B cell (primary cell): ENCODE measurements at regions of chr9 and their contacts with region 1.

Region 1: GRCh38 chr9:105881654-105882349 is 187.5 kb downstream of the TMEM38B start:
- DNase-seq: peak; percentile 67
- ATAC-seq: no peak
- H3K4me3 ChIP-seq: no peak overlapping the region
- H3K4me3 Mint-ChIP-seq: no peak overlapping the region
- H3K27ac ChIP-seq: no peak overlapping the region
- H3K27ac Mint-ChIP-seq: no peak overlapping the region
- H3K4me1 ChIP-seq: peaks cover 3 to 4% of the 10 kb centered on the region in 2 donors
- H3K4me1 Mint-ChIP-seq: peaks cover 11% of the 10 kb centered on the region
- H3K27me3 ChIP-seq: no peaks in the 10 kb centered on the region
- H3K27me3 Mint-ChIP-seq: peaks cover 11% of the 10 kb centered on the region
- CTCF ChIP-seq: peak; percentile 97

Region 2: GRCh38 chr9:105425841-105426436 is 455.9 kb before region 1 on chr9:
- CTCF ChIA-PET with region 1: no interaction called
- POLR2A ChIA-PET with region 1: no interaction called
- intact Hi-C with region 1: loop called (anchors 5 kb)
- DNase-seq: no peak
- ATAC-seq: no peak
- H3K4me3 ChIP-seq: no peak overlapping the region
- H3K4me3 Mint-ChIP-seq: no peak overlapping the region
- H3K27ac ChIP-seq: no peak overlapping the region
- H3K27ac Mint-ChIP-seq: no peak overlapping the region
- H3K4me1 ChIP-seq: no peaks in the 10 kb centered on the region
- H3K4me1 Mint-ChIP-seq: peaks cover 2% of the 10 kb centered on the region
- H3K27me3 ChIP-seq: no peaks in the 10 kb centered on the region
- H3K27me3 Mint-ChIP-seq: peaks cover 3% of the 10 kb centered on the region
- CTCF ChIP-seq: peak; percentile 41

Region 3: GRCh38 chr9:105608721-105609598 is 272.8 kb before region 1 on chr9:
- CTCF ChIA-PET with region 1: interaction called, 38 read pairs
- POLR2A ChIA-PET with region 1: no interaction called
- intact Hi-C with region 1: loop called (anchors 1 kb)
- DNase-seq: peak; percentile 69
- ATAC-seq: peak; percentile 60
- H3K4me3 ChIP-seq: no peak overlapping the region
- H3K4me3 Mint-ChIP-seq: no peak overlapping the region
- H3K27ac ChIP-seq: no peak overlapping the region
- H3K27ac Mint-ChIP-seq: peak overlapping the region; percentile 50
- H3K4me1 ChIP-seq: no peaks in the 10 kb centered on the region
- H3K4me1 Mint-ChIP-seq: peaks cover 3% of the 10 kb centered on the region
- H3K27me3 ChIP-seq: no peaks in the 10 kb centered on the region
- H3K27me3 Mint-ChIP-seq: no peaks in the 10 kb centered on the region
- CTCF ChIP-seq: peak; percentile 86

Region 4: DNA sequence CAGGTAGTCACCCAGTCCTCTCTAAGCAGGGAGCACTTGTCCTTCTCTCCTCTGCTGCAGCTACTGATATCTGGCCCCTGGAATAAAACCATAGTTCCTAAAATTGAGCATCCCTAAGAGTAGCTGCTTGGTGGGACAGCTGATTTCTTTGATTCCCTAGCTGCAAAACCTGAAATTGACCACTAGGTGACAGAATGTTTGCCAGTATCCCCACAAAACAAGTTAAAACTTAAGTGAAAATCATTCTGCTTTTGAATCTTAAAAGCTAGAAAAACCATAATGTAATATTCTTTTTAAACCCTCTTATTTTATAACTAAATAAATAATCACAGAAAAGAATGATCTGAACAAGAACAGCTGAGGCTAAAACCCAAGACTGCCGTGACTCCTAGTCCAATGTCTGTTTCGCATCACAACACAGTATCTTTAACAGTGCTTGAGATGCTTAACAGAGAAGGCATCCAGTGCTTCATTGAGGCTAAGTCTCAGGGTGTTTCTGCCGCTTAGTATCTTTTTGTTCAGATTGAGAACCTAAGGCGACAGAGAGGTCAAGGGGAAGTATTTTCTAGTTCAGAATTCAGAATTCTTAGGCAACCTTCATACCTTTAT is 243.9 kb before region 1 on chr9:
- CTCF ChIA-PET with region 1: interaction called, 10 read pairs
- POLR2A ChIA-PET with region 1: no interaction called
- intact Hi-C with region 1: no loop called
- DNase-seq: peak; percentile 12
- ATAC-seq: no peak
- H3K4me3 ChIP-seq: no peak overlapping the region
- H3K4me3 Mint-ChIP-seq: no peak overlapping the region
- H3K27ac ChIP-seq: no peak overlapping the region
- H3K27ac Mint-ChIP-seq: no peak overlapping the region
- H3K4me1 ChIP-seq: no peaks in the 10 kb centered on the region
- H3K4me1 Mint-ChIP-seq: no peaks in the 10 kb centered on the region
- H3K27me3 ChIP-seq: no peaks in the 10 kb centered on the region
- H3K27me3 Mint-ChIP-seq: no peaks in the 10 kb centered on the region
- CTCF ChIP-seq: peak; percentile 68

Region 5: DNA sequence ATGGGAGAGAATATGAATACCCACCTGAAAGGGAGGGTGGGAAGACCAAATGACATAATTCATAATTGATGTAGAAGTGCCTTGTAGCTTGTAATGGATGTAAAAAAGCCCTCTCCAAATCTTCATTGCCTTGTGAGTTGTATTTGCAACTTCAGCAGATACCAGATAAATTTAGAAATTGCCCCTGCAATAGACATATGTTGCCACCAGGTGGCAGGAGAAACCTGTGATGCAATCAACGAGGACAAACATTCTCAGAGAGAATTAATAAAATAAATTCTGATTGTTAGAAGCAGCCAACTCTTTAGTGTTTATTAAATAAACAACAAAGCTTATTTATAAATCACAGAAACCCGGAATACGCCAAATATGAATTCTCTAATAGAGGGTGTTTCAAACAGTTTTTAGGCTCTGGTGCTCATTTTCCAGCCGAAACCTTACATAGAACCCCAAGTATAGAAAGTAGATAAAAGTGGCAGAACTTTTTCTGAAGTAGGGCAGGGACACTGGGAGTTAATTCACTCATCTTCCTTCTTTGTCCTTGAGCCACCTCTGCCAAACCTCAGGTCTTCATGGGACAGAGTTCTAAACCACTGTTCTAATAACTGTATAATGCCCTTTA is 39.7 kb before region 1 on chr9:
- CTCF ChIA-PET with region 1: interaction called, 39 read pairs
- POLR2A ChIA-PET with region 1: no interaction called
- intact Hi-C with region 1: loop called (anchors 1 kb)
- DNase-seq: peak; percentile 28
- ATAC-seq: no peak
- H3K4me3 ChIP-seq: no peak overlapping the region
- H3K4me3 Mint-ChIP-seq: no peak overlapping the region
- H3K27ac ChIP-seq: no peak overlapping the region
- H3K27ac Mint-ChIP-seq: no peak overlapping the region
- H3K4me1 ChIP-seq: no peaks in the 10 kb centered on the region
- H3K4me1 Mint-ChIP-seq: no peaks in the 10 kb centered on the region
- H3K27me3 ChIP-seq: no peaks in the 10 kb centered on the region
- H3K27me3 Mint-ChIP-seq: no peaks in the 10 kb centered on the region
- CTCF ChIP-seq: peak; percentile 79

Region 6: DNA sequence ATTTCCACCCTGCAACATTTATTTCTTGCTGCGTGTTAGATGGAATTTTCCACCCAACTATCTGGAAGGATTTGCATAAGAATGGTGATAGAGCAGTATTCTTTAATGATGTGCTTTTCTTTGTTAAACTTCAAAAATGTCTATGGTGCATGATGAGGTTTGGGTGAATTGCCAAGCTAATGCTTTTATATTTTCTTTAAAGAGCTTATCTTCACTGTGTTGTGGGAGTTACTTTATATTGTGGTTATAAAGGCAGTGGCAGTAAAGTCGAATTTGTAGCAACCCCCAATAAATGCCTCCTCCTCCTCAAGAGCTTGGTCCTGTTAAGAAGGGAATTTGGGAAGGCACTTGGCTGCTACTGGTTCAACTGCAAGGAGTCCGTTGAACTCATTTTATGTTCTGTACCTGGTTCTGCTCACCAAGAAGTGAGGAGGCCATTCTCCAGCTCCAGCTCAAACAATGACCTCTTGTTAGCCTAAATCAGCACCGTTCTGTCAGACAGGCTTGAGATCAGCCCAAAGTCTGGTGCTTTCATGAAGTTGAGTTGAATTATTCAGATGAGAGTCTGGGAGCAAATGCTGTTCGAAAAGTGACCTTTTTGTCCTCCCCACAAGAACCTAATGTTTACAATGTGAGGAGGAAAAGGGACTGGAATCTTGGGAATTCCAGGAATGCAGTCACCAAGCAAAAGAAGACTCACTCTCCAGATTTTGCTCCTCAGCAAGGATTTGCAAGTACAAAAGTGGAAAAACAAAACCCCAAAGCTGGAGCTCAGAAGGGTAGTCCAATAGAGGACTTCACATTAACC is 29.5 kb after region 1 on chr9:
- CTCF ChIA-PET with region 1: no interaction called
- POLR2A ChIA-PET with region 1: no interaction called
- intact Hi-C with region 1: no loop called
- DNase-seq: no peak
- ATAC-seq: no peak
- H3K4me3 ChIP-seq: no peak overlapping the region
- H3K4me3 Mint-ChIP-seq: no peak overlapping the region
- H3K27ac ChIP-seq: no peak overlapping the region
- H3K27ac Mint-ChIP-seq: no peak overlapping the region
- H3K4me1 ChIP-seq: no peaks in the 10 kb centered on the region
- H3K4me1 Mint-ChIP-seq: no peaks in the 10 kb centered on the region
- H3K27me3 ChIP-seq: no peaks in the 10 kb centered on the region
- H3K27me3 Mint-ChIP-seq: no peaks in the 10 kb centered on the region
- CTCF ChIP-seq: no peak